Mammary epithelial cell (primary cell): ENCODE measurements at regions of chr5 and their contacts with region 1.

Region 1: GRCh38 chr5:158174918-158175851 is 316.2 kb upstream of the CLINT1 start:
- DNase-seq: peak; percentile 23
- H3K4me3 ChIP-seq: no peak overlapping the region
- H3K27ac ChIP-seq: no peak overlapping the region
- H3K4me1 ChIP-seq: no peaks in the 10 kb centered on the region
- H3K27me3 ChIP-seq: no peaks in the 10 kb centered on the region
- CTCF ChIP-seq: peak; percentile 79 to 91

Region 2: DNA sequence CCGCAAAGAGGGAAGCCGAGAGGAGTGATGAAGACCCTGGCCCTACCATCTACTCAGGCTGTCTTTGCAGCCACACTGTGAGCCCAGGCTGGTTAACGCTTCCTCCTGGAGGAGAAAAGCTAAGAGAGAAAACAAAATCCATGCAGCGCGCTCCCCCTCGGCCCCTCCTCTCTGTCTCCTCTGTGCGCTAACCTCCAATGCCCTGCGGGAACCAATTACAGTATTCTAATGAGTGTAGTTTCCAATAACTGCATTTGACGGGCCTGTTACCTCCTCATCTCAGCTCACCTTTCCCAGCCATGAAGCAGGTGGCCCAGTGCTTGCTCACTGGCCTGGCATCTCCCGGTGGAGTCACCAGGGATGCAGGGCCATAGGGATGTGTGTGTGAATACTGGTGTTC is 359.0 kb after region 1 on chr5:
- CTCF ChIA-PET with region 1: interaction called, 18 read pairs
- dilution Hi-C with region 1: no loop called
- in situ Hi-C with region 1: no loop called
- intact Hi-C with region 1: no loop called
- DNase-seq: no peak
- H3K4me3 ChIP-seq: no peak overlapping the region
- H3K27ac ChIP-seq: no peak overlapping the region
- H3K4me1 ChIP-seq: no peaks in the 10 kb centered on the region
- H3K27me3 ChIP-seq: peaks cover 2% of the 10 kb centered on the region
- CTCF ChIP-seq: no peak

Region 3: GRCh38 chr5:158695595-158696330 is 520.6 kb after region 1 on chr5:
- CTCF ChIA-PET with region 1: no interaction called
- dilution Hi-C with region 1: no loop called
- in situ Hi-C with region 1: no loop called
- intact Hi-C with region 1: loop called (anchors 1 kb)
- DNase-seq: peak; percentile 17
- H3K4me3 ChIP-seq: no peak overlapping the region
- H3K27ac ChIP-seq: no peak overlapping the region
- H3K4me1 ChIP-seq: no peaks in the 10 kb centered on the region
- H3K27me3 ChIP-seq: peaks cover 2% of the 10 kb centered on the region
- CTCF ChIP-seq: peak; percentile 90 to 97

Region 4: DNA sequence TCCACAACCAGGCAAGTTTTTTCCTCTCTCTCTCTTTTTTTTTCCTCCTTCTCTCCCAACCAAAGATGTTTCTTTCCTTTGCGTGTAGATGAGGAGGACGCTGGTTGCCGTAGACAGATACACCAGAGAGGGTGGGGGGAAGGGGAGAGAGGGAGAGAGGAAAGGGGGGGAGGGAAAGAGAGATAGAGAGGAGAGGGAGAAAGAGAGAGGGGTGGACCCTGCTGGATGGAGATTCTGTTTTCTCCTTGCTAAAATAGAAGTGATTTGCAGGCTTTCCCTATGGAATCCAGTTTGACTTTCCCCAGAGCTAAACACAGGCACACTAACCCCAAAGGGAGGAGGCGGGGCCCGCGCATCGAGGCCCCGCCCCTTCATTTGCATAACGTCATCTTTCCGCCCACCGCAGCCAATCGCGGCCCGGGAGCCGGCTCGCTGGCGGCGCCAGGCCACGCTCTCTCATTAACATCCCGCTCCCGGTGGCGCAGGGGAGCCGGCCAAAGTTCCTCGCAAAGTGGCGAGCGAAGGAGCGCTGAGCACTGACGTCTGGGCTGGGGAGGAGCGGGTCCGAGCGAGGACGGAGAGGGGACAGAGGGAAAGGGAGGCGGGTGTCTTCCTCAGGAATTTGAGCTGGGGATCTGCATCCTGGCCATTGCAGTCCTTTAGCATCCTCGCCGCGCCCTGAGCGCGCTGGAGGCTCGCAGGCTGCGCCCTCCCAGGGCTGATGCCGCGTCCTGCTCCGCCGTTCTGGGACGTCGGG is 925.0 kb after region 1 on chr5:
- CTCF ChIA-PET with region 1: interaction called, 17 read pairs
- dilution Hi-C with region 1: no loop called
- in situ Hi-C with region 1: loop called (anchors 10 kb)
- intact Hi-C with region 1: no loop called
- DNase-seq: peak; percentile 87
- H3K4me3 ChIP-seq: peak overlapping the region in 2 of 3 experiments; percentile 13 to 35
- H3K27ac ChIP-seq: no peak overlapping the region
- H3K4me1 ChIP-seq: peaks cover 12% of the 10 kb centered on the region
- H3K27me3 ChIP-seq: peaks cover 55% of the 10 kb centered on the region
- CTCF ChIP-seq: no peak

Region 5: GRCh38 chr5:159106569-159107282 is 931.5 kb after region 1 on chr5:
- CTCF ChIA-PET with region 1: interaction called, 4 read pairs
- dilution Hi-C with region 1: no loop called
- in situ Hi-C with region 1: loop called (anchors 10 kb)
- intact Hi-C with region 1: loop called (anchors 1 kb)
- DNase-seq: peak; percentile 38
- H3K4me3 ChIP-seq: peak overlapping the region in 2 of 3 experiments; percentile 14 to 28
- H3K27ac ChIP-seq: no peak overlapping the region
- H3K4me1 ChIP-seq: peaks cover 4% of the 10 kb centered on the region
- H3K27me3 ChIP-seq: peaks cover 30% of the 10 kb centered on the region
- CTCF ChIP-seq: peak; percentile 88 to 90

Region 6: GRCh38 chr5:159133041-159133741 is 958.0 kb after region 1 on chr5:
- CTCF ChIA-PET with region 1: no interaction called
- dilution Hi-C with region 1: no loop called
- in situ Hi-C with region 1: no loop called
- intact Hi-C with region 1: loop called (anchors 2 kb)
- DNase-seq: peak; percentile 38
- H3K4me3 ChIP-seq: no peak overlapping the region
- H3K27ac ChIP-seq: no peak overlapping the region
- H3K4me1 ChIP-seq: no peaks in the 10 kb centered on the region
- H3K27me3 ChIP-seq: no peaks in the 10 kb centered on the region
- CTCF ChIP-seq: peak; percentile 62 to 69